ENCODE measurements at regions of chr3 and their contacts with region 1.

Region 1: GRCh38 chr3:42749753-42750231 is 23.3 kb downstream of the CCDC13 start:
- DNase-seq: no peak
- ATAC-seq: peak; percentile 43 to 61
- H3K4me3 ChIP-seq: no peak overlapping the region
- H3K27ac ChIP-seq: peak overlapping the region; percentile 37 to 99 (median 90)
- H3K4me1 ChIP-seq: peaks cover 14 to 24% of the 10 kb centered on the region in 2 donors
- H3K27me3 ChIP-seq: no peaks in the 10 kb centered on the region
- CTCF ChIP-seq: peak; percentile 20 to 62 (median 47)
- POLR2A ChIP-seq: no peak

Region 2: DNA sequence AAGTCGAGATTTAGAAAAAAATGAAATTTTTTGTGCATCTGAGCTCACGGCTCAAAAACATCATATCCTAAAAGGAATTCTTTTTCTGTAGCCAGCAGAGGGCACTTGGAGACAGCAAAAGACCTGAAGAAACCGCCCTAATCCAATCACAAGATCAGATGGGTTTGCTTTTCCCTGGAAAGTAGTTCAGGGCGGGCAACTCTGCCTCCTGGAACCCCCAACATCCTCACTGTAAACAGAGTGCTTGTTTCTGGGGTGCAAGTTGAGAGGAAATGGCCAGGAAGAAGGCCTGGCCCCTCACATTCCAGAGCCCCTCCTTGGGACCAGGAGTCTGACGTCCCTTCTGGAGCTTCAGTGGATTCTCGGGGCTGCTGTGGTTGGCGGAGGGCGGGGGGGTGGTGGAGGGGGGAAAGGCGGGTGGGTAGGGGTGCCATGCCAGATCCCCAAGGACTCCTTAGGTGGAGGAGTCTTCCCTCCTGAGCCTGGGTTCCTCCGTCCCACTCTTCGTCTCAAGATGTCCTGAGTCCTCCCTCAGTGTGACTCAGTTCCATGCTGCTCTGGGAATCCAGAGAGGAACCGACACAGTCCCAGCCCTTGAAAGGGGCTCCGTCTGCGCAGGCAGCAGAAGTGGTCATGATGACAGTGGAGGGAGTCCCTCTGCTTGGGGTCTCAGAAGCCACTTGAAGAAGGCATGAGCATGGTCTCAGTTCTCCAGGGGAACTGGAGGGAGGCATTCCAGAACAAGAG is 519.7 kb before region 1 on chr3:
- in situ Hi-C with region 1: no loop called
- intact Hi-C with region 1: loop called (anchors 10 kb)
- DNase-seq: no peak
- ATAC-seq: no peak
- H3K4me3 ChIP-seq: no peak overlapping the region
- H3K27ac ChIP-seq: no peak overlapping the region
- H3K4me1 ChIP-seq: peaks cover 18 to 20% of the 10 kb centered on the region in 2 donors
- H3K27me3 ChIP-seq: no peaks in the 10 kb centered on the region
- CTCF ChIP-seq: peak; percentile 38 to 61 (median 58)
- POLR2A ChIP-seq: no peak

Region 3: GRCh38 chr3:42581709-42582473 is 167.9 kb before region 1 on chr3 and contains the start of gene SEC22C:
- in situ Hi-C with region 1: loop called (anchors 5 to 25 kb)
- intact Hi-C with region 1: loop called (anchors 1 kb)
- DNase-seq: peak; percentile 96 to 97
- ATAC-seq: peak; percentile 96 to 98
- H3K4me3 ChIP-seq: peak within 1 kb of the TSS; percentile 71 to 82 (median 75)
- H3K27ac ChIP-seq: peak within 1 kb of the TSS; percentile 87 to 94 (median 92)
- H3K4me1 ChIP-seq: peaks cover 11 to 19% of the 10 kb centered on the region in 2 donors
- H3K27me3 ChIP-seq: no peaks in the 10 kb centered on the region
- CTCF ChIP-seq: peak in 3 of 5 experiments; percentile 15 to 43 (median 38)
- POLR2A ChIP-seq: peak; percentile 91 to 98
- total RNA-seq, gene SEC22C: 35.5 to 54.6 (median 40.6) TPM

Region 4: DNA sequence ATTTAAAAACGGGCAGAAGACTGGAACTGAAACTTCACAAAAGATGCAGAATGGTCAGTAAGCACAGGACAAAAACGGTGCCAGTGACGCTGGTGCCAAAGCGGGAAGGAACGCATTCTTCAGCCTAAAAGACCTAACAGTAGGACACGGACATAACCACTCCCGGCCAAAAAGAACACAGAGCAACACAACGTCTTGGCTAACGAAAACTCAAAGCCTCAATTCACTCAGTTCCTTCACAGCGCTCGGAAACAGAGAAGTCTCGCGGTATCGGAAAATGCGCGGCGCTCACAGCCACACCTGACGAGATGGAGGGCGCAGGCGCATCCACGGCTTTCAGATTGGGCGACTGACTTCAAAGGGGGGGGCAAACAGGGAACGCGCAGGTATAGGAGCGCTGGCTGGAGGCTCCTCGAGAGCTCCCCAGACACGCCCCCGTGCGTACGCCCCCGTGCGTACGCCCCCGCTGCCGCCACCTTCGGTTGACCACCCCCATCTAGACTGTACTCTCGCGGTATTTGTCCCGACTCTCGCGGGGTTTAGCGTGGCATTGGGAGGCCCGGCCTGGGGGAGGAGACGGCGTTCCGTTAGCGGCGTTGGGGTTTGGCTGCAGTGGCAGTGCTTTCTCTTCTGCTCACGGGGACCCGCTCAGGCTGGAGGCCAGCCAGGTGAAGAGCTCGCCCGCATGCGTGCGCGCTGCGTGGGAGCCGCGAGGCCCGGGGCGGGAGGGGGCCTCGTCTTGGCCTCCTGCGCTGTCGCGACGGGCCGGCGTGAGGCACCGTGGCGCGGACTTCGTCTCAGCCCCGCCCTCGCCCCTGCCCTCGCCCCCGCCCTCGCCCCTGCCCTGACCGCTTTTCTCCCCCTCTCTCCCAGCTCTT is 149.4 kb before region 1 on chr3 and contains the start of gene NKTR:
- in situ Hi-C with region 1: loop called in 1 of 4 experiments (anchors 25 kb)
- intact Hi-C with region 1: loop called (anchors 1 kb)
- DNase-seq: peak; percentile 94 to 97
- ATAC-seq: peak; percentile 91 to 92
- H3K4me3 ChIP-seq: peak within 1 kb of the TSS; percentile 86 to 93 (median 90)
- H3K27ac ChIP-seq: peak within 1 kb of the TSS; percentile 96 to 99 (median 98)
- H3K4me1 ChIP-seq: peaks cover 29 to 33% of the 10 kb centered on the region in 2 donors
- H3K27me3 ChIP-seq: no peaks in the 10 kb centered on the region
- CTCF ChIP-seq: no peak
- POLR2A ChIP-seq: peak; percentile 88 to 90
- total RNA-seq, gene NKTR: 10.0 to 56.6 (median 13.6) TPM

Region 5: GRCh38 chr3:42652611-42653302 is 97.0 kb before region 1 on chr3:
- in situ Hi-C with region 1: loop called in 2 of 4 experiments (anchors 10 kb)
- intact Hi-C with region 1: loop called (anchors 2 kb)
- DNase-seq: peak in 1 of 2 donors; percentile 59
- ATAC-seq: no peak
- H3K4me3 ChIP-seq: peak overlapping the region; percentile 67 to 73 (median 70)
- H3K27ac ChIP-seq: peak overlapping the region; percentile 87 to 100 (median 92)
- H3K4me1 ChIP-seq: peaks cover 40 to 42% of the 10 kb centered on the region in 2 donors
- H3K27me3 ChIP-seq: no peaks in the 10 kb centered on the region
- CTCF ChIP-seq: no peak
- POLR2A ChIP-seq: peak; percentile 76 to 80

Region 6: DNA sequence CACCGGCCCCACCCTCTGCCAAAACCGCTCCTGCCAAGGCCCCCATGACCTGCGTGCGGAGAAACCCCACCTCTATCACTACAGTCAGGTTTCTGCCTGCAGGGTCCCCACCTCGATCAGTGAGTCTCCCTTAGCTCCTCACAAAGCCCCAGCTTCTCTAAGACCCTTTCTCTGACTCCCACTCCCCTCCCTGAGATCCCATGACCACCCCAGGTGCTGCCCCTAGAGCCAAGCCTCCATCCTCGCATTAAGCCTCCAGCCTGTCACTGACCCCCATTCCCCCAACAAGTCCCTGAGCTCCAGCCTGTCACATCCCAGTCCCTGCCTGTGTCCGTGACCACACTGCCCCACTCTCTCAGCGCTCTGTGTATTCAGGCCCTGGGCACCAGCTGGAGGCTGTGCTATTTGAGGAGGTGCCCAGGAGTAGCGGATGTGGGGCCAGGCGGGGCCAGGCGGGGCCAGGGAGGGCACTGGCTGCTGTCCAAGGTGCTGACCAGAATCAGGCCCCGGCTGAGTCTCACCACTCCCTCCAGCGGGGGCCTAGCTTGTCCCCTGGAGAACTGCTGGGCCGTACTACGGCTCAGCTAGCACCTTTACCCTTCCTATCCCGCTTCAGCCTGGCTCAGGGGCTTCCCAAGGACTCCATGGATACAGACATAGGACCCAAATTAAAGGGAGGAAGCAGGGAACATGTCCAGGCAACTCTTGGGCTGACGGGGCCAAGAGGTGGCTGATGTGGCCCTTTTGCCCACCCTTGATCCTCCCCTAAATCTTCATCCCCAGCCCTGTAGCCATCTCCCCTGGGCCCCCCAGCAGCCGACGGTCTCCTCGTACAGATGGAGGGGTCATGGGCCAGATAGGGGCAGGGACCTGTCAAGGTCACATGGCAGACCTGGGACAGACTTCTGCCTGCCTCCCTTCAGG is 48.4 kb before region 1 on chr3:
- in situ Hi-C with region 1: loop called in 1 of 4 experiments (anchors 5 kb)
- intact Hi-C with region 1: loop called (anchors 1 kb)
- DNase-seq: peak; percentile 87 to 96
- ATAC-seq: peak; percentile 44 to 52
- H3K4me3 ChIP-seq: peak overlapping the region; percentile 39 to 61 (median 54)
- H3K27ac ChIP-seq: peak overlapping the region; percentile 94 to 100 (median 99)
- H3K4me1 ChIP-seq: peaks cover 63 to 64% of the 10 kb centered on the region in 2 donors
- H3K27me3 ChIP-seq: no peaks in the 10 kb centered on the region
- CTCF ChIP-seq: peak in 2 of 5 experiments; percentile 7 to 12
- POLR2A ChIP-seq: peak; percentile 84 to 92

Region 7: GRCh38 chr3:42772670-42773408 is 23.0 kb after region 1 on chr3 and contains the start of gene CCDC13:
- in situ Hi-C with region 1: no loop called
- intact Hi-C with region 1: no loop called
- DNase-seq: peak; percentile 88 to 89
- ATAC-seq: peak; percentile 89 to 91
- H3K4me3 ChIP-seq: peak within 1 kb of the TSS; percentile 53 to 73 (median 58)
- H3K27ac ChIP-seq: peak within 1 kb of the TSS; percentile 27 to 69 (median 30)
- H3K4me1 ChIP-seq: peaks cover 5% of the 10 kb centered on the region in 2 donors
- H3K27me3 ChIP-seq: no peaks in the 10 kb centered on the region
- CTCF ChIP-seq: no peak
- POLR2A ChIP-seq: peak in 1 of 2 donors; percentile 32
- total RNA-seq, gene CCDC13: 0.12 to 1.5 (median 1.1) TPM

Region 8: DNA sequence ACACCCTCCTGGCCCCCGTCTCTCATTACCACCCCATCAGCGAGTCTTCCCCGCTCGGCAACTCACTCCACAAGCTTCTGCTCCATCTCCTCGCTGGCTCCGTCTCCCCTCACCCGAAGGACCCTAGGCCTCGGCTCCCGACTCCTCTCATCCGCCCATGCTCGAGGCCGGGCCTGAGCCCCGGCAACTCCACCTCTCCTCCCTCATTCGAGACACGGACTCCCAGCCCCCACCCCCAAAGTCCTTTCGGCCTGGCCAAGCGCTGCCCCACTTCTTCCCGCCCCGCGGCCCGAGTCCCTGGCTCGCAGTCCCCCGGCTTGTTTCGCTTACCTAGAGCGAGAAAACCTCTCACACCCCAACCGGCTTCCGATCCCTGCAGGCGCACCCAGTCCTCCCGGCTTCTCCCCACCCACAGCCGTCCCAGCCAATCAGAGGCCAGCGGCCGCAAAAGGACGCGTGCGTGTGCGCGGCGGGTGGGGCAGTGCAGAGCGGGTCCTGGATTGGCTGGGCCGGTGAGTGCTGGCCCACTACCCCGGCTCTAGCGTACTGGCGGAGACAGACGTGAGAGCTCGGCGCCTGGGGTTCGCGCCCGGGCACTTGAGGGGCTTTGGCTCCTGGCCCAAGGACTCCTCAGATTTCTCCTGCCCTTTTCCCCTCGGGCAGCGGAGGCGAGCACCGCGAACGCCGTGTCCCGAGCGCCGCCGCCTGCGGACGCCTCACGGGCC is 54.5 kb after region 1 on chr3 and contains the start of gene HIGD1A:
- in situ Hi-C with region 1: no loop called
- intact Hi-C with region 1: loop called (anchors 2 kb)
- DNase-seq: peak; percentile 96
- ATAC-seq: peak; percentile 89 to 94
- H3K4me3 ChIP-seq: peak within 1 kb of the TSS; percentile 78 to 98 (median 88)
- H3K27ac ChIP-seq: peak within 1 kb of the TSS; percentile 95 to 98 (median 97)
- H3K4me1 ChIP-seq: peaks cover 36 to 41% of the 10 kb centered on the region in 2 donors
- H3K27me3 ChIP-seq: no peaks in the 10 kb centered on the region
- CTCF ChIP-seq: no peak
- POLR2A ChIP-seq: peak; percentile 98
- total RNA-seq, gene HIGD1A: 123 to 156 (median 139) TPM

Region 9: DNA sequence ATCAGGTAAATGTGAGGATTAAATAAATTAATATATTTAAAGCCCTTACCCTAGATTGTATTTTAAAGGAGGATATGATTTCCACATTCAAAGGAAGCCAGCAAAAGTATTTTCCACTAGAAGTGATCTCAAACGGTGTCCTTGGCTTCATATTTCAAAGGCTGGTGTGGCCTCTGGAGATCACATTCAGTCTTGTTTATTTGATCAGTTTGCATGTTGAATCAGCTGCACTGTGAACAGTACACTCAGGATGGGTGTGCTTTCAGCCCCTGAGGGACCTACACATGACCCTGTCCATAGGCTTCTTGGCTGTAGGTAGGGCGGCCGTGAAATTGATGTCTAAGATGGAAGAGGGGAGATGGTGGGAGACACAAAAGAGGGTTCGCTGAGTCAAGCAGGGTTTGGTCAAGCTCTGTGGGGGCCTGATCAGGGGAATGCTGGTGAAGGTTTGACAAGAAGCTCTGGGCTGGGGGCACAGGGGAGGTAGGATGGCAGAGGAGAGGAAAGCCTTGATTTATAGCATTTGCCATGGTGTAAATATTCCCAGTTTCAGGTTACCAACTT is 104.0 kb after region 1 on chr3:
- in situ Hi-C with region 1: no loop called
- intact Hi-C with region 1: no loop called
- DNase-seq: peak in 1 of 2 donors; percentile 20
- ATAC-seq: peak; percentile 38 to 77
- H3K4me3 ChIP-seq: no peak overlapping the region
- H3K27ac ChIP-seq: peak overlapping the region in 3 of 4 donors; percentile 1 to 47 (median 13)
- H3K4me1 ChIP-seq: peaks cover 12 to 27% of the 10 kb centered on the region in 2 donors
- H3K27me3 ChIP-seq: no peaks in the 10 kb centered on the region
- CTCF ChIP-seq: no peak
- POLR2A ChIP-seq: no peak

Region 10: DNA sequence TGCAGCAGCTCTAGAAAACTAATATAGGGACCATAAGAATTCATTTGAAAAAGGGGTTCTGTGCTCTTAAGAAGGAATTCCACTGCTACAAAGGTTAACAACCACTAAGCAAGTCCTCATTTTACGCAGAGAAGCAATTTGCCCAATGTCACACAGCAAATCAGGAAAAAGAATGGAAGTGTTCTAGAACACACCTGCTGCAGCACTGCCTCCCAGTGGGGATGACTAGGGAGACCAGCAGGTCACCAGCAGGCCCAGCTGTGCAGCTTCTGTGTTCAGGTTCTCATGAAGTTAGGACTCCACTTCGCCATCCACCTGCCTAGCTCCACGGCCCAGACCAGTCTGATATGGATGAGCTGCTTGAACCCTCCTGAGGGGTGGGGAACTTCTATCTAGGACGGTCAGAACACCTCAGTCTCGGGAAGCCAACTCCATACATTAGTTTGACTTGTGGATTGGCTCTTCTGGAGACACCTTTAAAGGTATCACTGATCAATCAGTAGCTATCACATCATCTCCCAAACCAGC is 337.5 kb after region 1 on chr3:
- in situ Hi-C with region 1: no loop called
- intact Hi-C with region 1: no loop called
- DNase-seq: no peak
- ATAC-seq: no peak
- H3K4me3 ChIP-seq: no peak overlapping the region
- H3K27ac ChIP-seq: no peak overlapping the region
- H3K4me1 ChIP-seq: peaks cover 12 to 17% of the 10 kb centered on the region in 2 donors
- H3K27me3 ChIP-seq: no peaks in the 10 kb centered on the region
- CTCF ChIP-seq: no peak
- POLR2A ChIP-seq: no peak